ENCODE measurements at regions of chr4 and their contacts with region 1.

Region 1: GRCh38 chr4:5979976-5980375 is 38.3 kb downstream of the C4orf50 start:
- DNase-seq: peak; percentile 85
- ATAC-seq: peak; percentile 96
- H3K4me3 Mint-ChIP-seq: no peak overlapping the region
- H3K27ac Mint-ChIP-seq: no peak overlapping the region
- H3K4me1 Mint-ChIP-seq: peaks cover 2% of the 10 kb centered on the region; the same call in 1 of the 2 replicates
- H3K27me3 Mint-ChIP-seq: peaks cover 13% of the 10 kb centered on the region
- CTCF ChIP-seq: no peak

Region 2: DNA sequence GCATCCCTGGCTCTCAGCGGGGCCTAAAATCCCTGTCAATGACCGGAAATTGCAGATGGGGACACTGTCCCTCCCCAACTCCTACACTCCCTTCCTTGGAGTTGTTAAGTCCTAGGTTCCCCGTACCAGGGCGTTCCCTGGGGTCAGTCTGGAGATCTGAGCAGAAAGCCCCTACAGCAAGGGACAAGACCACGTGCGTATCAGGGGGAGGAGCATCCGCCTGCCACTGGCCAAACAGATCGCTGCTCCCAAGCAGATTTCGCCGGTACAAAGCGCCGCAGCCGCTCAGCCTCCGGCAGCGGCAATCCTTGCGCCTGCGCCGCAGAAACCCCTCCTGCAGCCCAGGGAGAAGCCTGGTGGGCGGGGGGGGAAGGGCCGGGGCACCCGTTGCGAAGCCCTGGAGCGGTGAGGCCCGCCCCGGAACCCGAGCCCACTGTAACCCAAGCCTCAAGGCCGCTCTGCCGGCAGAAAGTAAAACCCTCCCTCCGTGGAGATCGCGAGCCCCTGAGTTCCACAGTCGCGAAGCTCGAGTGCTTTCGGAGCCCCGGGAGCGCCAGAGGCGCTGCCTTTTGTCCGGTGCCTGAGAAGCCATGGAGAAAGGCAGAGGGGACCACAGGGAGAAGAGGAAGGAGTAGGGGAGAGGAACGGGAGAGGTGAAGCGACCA is 89.8 kb before region 1 on chr4:
- CTCF ChIA-PET with region 1: interaction called, 25 read pairs
- POLR2A ChIA-PET with region 1: interaction called, 3 read pairs
- DNase-seq: peak; percentile 93
- ATAC-seq: peak; percentile 60
- H3K4me3 Mint-ChIP-seq: peak overlapping the region; percentile 73
- H3K27ac Mint-ChIP-seq: peak overlapping the region; percentile 99
- H3K4me1 Mint-ChIP-seq: peaks cover 55% of the 10 kb centered on the region
- H3K27me3 Mint-ChIP-seq: peaks cover 57% of the 10 kb centered on the region
- CTCF ChIP-seq: no peak